Activated CD4-positive, alpha-beta T cell treated with anti-CD3 and anti-CD28 coated beads, Interleukin-2, amount 10 ng/mL, durations not matched to agents 24 days and 14 days (primary cell): ENCODE measurements at regions of chr7 and their contacts with region 1.

Region 1: DNA sequence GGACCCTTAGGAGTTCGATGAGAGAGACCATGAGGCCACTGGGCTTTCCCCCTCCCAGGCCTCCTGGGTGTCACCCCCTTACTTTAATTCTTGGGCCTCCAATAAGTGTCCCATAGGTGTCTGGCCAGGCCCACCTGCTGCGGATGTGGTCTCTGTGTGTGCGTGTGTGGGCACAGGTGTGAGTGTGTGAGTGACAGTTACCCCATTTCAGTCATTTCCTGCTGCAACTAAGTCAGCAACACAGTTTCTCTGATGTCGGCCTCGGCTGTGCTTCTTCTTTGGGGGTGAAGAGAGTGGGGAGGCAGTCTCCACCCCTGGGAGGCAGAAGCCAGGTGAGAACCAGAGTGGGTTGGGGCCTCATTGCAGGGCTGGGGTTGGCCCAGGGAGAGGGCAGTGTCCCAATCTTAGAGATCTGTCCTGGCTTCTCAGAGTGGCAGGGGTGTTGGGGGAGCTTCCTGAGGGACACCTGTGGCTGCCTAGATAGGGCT is 1.5 kb downstream of the PVRIG start:
- DNase-seq: peak; percentile 92
- H3K4me3 Mint-ChIP-seq: peak overlapping the region; percentile 96
- H3K27ac Mint-ChIP-seq: peak overlapping the region; percentile 99
- H3K4me1 Mint-ChIP-seq: peaks cover 54% of the 10 kb centered on the region
- H3K27me3 Mint-ChIP-seq: no peaks in the 10 kb centered on the region

Region 2: GRCh38 chr7:100148559-100149350 is 72.5 kb before region 1 on chr7 and contains the start of gene LAMTOR4:
- intact Hi-C with region 1: loop called (anchors 2 kb)
- DNase-seq: peak; percentile 100
- H3K4me3 Mint-ChIP-seq: peak within 1 kb of the TSS; percentile 99
- H3K27ac Mint-ChIP-seq: peak within 1 kb of the TSS; percentile 99
- H3K4me1 Mint-ChIP-seq: peaks cover 33% of the 10 kb centered on the region
- H3K27me3 Mint-ChIP-seq: no peaks in the 10 kb centered on the region
- total RNA-seq, gene LAMTOR4: 123 and 126 TPM in 2 replicates

Region 3: GRCh38 chr7:100247152-100247757 is 26.0 kb after region 1 on chr7:
- intact Hi-C with region 1: no loop called
- DNase-seq: no peak
- H3K4me3 Mint-ChIP-seq: no peak overlapping the region
- H3K27ac Mint-ChIP-seq: no peak overlapping the region
- H3K4me1 Mint-ChIP-seq: peaks cover 17% of the 10 kb centered on the region
- H3K27me3 Mint-ChIP-seq: no peaks in the 10 kb centered on the region

Region 4: GRCh38 chr7:100369105-100369504 is 147.8 kb after region 1 on chr7:
- intact Hi-C with region 1: no loop called
- DNase-seq: no peak
- H3K4me3 Mint-ChIP-seq: no peak overlapping the region
- H3K27ac Mint-ChIP-seq: no peak overlapping the region
- H3K4me1 Mint-ChIP-seq: peaks cover 36% of the 10 kb centered on the region
- H3K27me3 Mint-ChIP-seq: no peaks in the 10 kb centered on the region